Activated B cell treated with CpG ODN at 0.5 μM for 24 hours (primary cell): ENCODE measurements at regions of chr1 and their contacts with region 1.

Region 1: DNA sequence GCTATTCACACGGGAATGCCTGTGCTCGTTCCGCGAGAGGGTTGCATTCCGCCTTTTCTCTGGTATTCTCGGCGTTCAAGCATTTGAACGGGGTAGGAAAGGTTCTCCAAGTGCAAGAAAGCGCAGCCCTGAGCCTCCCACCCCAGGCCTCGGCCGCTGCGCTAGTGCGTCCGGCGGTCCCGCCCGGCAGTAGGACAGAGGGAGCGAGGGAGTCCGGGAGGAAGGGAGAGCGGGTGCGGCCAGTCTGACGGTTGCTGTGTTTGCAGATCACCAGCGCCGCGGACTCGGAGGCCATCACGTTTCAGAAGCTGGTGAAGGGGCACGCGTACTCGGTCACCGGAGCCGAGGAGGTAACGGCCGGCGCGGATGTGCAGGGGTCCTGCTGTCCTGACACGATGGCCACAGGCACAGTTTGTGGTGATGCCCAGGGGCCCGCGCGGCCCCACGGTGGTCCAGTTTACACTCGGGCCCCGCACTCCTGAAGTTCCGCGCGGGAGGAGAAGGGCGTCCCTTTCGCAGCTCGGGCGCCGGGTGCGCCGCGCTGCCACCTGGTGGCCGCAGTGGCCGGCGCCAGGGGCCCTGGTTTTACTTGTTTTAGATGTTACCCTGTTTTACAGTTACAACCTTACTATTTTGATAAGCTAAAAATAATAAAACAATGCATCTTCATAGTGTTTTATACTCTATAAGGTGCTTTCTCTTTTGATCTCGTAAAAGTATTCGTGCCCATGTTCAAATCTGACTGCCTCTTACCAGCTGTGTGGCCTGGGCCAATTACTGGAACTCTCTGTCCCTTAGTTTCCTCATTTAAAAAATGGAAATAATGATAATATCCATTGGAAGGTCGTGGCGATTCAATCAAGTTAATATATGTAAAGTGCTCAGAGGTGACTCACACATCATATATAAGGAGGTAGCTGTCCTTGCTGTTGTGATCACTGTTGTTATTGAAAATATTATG is 36.7 kb downstream of the CAPN2 start:
- DNase-seq: peak; percentile 70
- ATAC-seq: peak; percentile 86
- H3K4me3 Mint-ChIP-seq: peak overlapping the region; percentile 82
- H3K27ac Mint-ChIP-seq: no peak overlapping the region
- H3K4me1 Mint-ChIP-seq: peaks cover 10% of the 10 kb centered on the region
- H3K27me3 Mint-ChIP-seq: no peaks in the 10 kb centered on the region
- CTCF ChIP-seq: peak; percentile 93

Region 2: GRCh38 chr1:223695941-223696340 is 53.1 kb before region 1 on chr1:
- CTCF ChIA-PET with region 1: interaction called, 94 read pairs
- POLR2A ChIA-PET with region 1: interaction called, 6 read pairs
- intact Hi-C with region 1: loop called (anchors 1 kb)
- DNase-seq: no peak
- ATAC-seq: no peak
- H3K4me3 Mint-ChIP-seq: no peak overlapping the region
- H3K27ac Mint-ChIP-seq: no peak overlapping the region
- H3K4me1 Mint-ChIP-seq: peaks cover 6% of the 10 kb centered on the region
- H3K27me3 Mint-ChIP-seq: no peaks in the 10 kb centered on the region
- CTCF ChIP-seq: no peak

Region 3: DNA sequence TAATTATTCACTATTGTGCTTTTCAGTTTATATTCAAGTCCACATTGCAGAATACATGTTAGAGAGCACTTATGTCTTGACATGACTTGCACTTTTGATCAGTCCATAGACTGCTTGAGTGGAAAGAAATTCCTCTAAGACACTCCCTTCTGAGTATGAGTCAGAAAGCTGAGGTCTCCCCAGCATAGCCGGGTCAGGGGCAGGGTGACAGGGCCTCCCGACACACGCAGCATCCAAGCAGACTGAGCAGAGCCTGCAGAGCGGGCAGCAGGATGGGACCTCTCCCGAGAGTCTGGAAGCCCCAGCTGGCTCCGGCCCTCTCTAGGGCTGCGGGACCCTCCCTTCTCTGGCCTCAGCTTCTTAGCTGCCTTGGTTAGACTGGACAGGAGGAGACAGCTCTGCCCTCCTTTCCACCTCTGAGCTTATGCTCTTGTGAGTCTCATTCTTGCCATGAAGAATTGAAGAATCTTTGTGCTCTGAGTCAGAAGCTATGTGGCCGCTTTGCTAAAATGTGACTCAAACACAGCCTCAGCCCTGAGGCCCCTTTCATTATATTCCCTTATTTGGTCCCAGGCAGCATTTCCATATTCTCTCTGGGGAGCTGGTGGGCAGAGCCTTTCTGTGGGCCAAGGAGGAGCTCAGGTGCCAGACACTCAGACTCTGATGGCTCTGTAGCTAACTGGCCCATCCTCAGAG is 48.0 kb before region 1 on chr1:
- CTCF ChIA-PET with region 1: interaction called, 94 read pairs
- POLR2A ChIA-PET with region 1: interaction called, 6 read pairs
- intact Hi-C with region 1: loop called (anchors 1 kb)
- DNase-seq: no peak
- ATAC-seq: no peak
- H3K4me3 Mint-ChIP-seq: no peak overlapping the region
- H3K27ac Mint-ChIP-seq: no peak overlapping the region
- H3K4me1 Mint-ChIP-seq: peaks cover 9% of the 10 kb centered on the region
- H3K27me3 Mint-ChIP-seq: peaks cover 13% of the 10 kb centered on the region
- CTCF ChIP-seq: no peak

Region 4: GRCh38 chr1:223712194-223712849 is 36.7 kb before region 1 on chr1 and contains the start of gene CAPN2:
- CTCF ChIA-PET with region 1: interaction called, 42 read pairs
- POLR2A ChIA-PET with region 1: interaction called, 10 read pairs
- intact Hi-C with region 1: loop called (anchors 1 kb)
- DNase-seq: peak; percentile 67
- ATAC-seq: peak; percentile 74
- H3K4me3 Mint-ChIP-seq: peak within 1 kb of the TSS; percentile 86
- H3K27ac Mint-ChIP-seq: peak within 1 kb of the TSS; percentile 72
- H3K4me1 Mint-ChIP-seq: peaks cover 49% of the 10 kb centered on the region
- H3K27me3 Mint-ChIP-seq: no peaks in the 10 kb centered on the region
- CTCF ChIP-seq: no peak
- total RNA-seq, gene CAPN2: 50.7 and 62.6 TPM in 2 replicates

Region 5: GRCh38 chr1:223726380-223727001 is 22.6 kb before region 1 on chr1:
- CTCF ChIA-PET with region 1: interaction called, 15 read pairs
- POLR2A ChIA-PET with region 1: interaction called, 7 read pairs
- intact Hi-C with region 1: loop called (anchors 1 kb)
- DNase-seq: peak; percentile 45
- ATAC-seq: peak; percentile 97
- H3K4me3 Mint-ChIP-seq: peak overlapping the region; percentile 39
- H3K27ac Mint-ChIP-seq: peak overlapping the region; percentile 78
- H3K4me1 Mint-ChIP-seq: peaks cover 40% of the 10 kb centered on the region
- H3K27me3 Mint-ChIP-seq: no peaks in the 10 kb centered on the region
- CTCF ChIP-seq: no peak

Region 6: GRCh38 chr1:223831755-223832636 is 82.9 kb after region 1 on chr1:
- CTCF ChIA-PET with region 1: no interaction called
- POLR2A ChIA-PET with region 1: no interaction called
- intact Hi-C with region 1: no loop called
- DNase-seq: no peak
- ATAC-seq: peak; percentile 70
- H3K4me3 Mint-ChIP-seq: peak overlapping the region; percentile 57
- H3K27ac Mint-ChIP-seq: peak overlapping the region; percentile 87
- H3K4me1 Mint-ChIP-seq: peaks cover 11% of the 10 kb centered on the region
- H3K27me3 Mint-ChIP-seq: no peaks in the 10 kb centered on the region
- CTCF ChIP-seq: no peak